Breast epithelium (tissue), 4 donors: ENCODE measurements at regions of chr6 and their contacts with region 1.

Region 1: DNA sequence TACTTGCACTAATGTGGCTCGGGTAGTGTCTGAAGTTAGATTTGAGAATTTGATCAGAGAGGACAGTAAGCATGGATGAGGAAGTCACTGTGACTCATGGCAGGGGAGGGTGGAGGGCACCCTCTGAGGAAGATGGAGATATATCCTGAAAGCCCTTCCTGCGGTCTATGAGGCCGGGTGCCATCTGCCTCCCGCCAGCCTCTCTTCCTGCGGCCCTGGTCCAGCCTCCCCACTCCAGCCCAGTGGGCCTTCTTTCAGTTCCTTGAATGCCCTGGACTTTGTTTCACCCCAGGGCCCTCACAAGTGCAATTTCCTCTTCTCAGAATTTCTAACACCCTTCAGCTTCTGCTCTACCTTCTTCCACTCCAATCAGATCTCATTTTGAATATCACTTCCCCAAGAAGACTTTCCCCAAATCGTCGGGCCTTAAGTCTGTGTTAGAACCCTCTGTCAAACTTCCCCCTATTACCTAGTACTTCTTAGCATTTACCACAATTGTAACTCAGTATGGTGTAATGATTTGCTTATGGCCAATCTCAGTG is 20.2 kb upstream of the TNFAIP3 start:
- DNase-seq: no peak
- H3K4me3 ChIP-seq: no peak overlapping the region
- H3K27ac ChIP-seq: no peak overlapping the region
- H3K4me1 ChIP-seq: no peaks in the 10 kb centered on the region
- H3K27me3 ChIP-seq: no peaks in the 10 kb centered on the region
- CTCF ChIP-seq: no peak
- POLR2A ChIP-seq: no peak

Region 2: GRCh38 chr6:136429264-136430065 is 1417.4 kb before region 1 on chr6:
- intact Hi-C with region 1: no loop called
- DNase-seq: no peak
- H3K4me3 ChIP-seq: no peak overlapping the region
- H3K27ac ChIP-seq: no peak overlapping the region
- H3K4me1 ChIP-seq: no peaks in the 10 kb centered on the region
- H3K27me3 ChIP-seq: no peaks in the 10 kb centered on the region
- CTCF ChIP-seq: no peak
- POLR2A ChIP-seq: no peak

Region 3: DNA sequence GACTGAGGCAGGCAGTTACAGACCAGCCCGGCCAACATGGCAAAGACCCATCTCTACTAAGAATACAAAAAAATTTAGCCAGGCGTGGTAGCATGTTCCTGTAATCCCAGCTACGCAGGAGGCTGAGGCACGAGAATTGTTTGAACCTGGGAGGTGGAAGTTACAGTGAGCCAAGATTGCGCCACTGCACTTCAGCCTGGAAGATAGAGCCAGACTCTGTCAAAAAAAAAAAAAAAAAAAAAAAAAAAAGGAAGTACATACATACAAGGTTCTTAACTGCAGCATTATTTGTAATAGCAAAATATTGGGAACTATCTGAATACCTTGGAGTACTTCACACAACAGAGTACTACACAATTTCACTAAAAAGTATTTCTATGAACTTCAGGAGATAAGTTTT is 169.1 kb before region 1 on chr6:
- intact Hi-C with region 1: loop called (anchors 2 kb)
- DNase-seq: no peak
- H3K4me3 ChIP-seq: no peak overlapping the region
- H3K27ac ChIP-seq: no peak overlapping the region
- H3K4me1 ChIP-seq: no peaks in the 10 kb centered on the region
- H3K27me3 ChIP-seq: no peaks in the 10 kb centered on the region
- CTCF ChIP-seq: no peak
- POLR2A ChIP-seq: no peak